ENCODE measurements at regions of chr1 and their contacts with region 1.

Region 1: GRCh38 chr1:159370855-159371254 is 61.1 kb upstream of the OR10J4 start:
- DNase-seq: no peak
- ATAC-seq: no peak
- H3K4me3 ChIP-seq: no peak overlapping the region
- H3K27ac ChIP-seq: no peak overlapping the region
- H3K4me1 ChIP-seq: no peaks in the 10 kb centered on the region
- H3K27me3 ChIP-seq: no peaks in the 10 kb centered on the region
- CTCF ChIP-seq: no peak

Region 2: DNA sequence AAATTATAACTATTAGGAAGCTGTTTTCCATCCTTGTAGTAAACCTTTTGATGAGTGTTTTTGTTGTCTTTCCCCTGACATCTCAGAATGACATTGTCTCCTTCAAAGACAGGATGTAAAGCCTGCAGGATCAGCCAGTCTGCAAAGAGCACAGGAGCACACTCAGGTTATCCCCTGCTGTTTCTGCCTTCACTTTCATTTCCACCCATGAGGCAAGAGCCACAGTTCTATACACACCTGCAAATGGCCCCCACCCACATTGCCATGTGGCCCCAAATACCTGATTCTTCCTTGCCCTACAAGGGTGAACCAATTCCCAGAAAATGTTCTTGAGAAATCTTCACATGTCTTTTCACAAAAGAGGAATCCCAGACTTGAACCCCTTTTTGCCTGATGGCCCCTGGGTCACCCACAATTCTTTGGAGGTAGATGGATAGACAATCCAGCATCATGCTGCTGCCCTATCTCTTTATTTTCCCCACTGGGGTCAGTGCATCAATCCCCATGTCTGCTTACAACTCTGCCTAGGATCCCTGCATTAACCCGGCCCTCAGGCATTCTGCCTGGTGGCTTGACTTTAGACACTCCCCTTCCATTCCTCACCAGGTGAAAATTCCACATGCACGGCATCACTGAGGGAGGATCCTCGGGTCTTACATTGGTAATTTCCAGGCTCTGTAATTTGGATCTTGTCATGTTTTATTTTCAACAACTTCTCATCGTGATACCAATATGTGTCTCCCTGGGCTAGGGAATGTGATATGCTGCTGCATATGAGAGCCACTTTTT is 1672.9 kb before region 1 on chr1:
- intact Hi-C with region 1: loop called in 1 of 2 experiments (anchors 5 kb)
- DNase-seq: no peak
- ATAC-seq: no peak
- H3K4me3 ChIP-seq: no peak overlapping the region
- H3K27ac ChIP-seq: no peak overlapping the region
- H3K4me1 ChIP-seq: no peaks in the 10 kb centered on the region
- H3K27me3 ChIP-seq: no peaks in the 10 kb centered on the region
- CTCF ChIP-seq: no peak

Region 3: GRCh38 chr1:160124705-160125478 is 754.0 kb after region 1 on chr1:
- intact Hi-C with region 1: no loop called
- DNase-seq: peak in 1 of 2 donors; percentile 72
- ATAC-seq: peak; percentile 67 to 74 (median 73)
- H3K4me3 ChIP-seq: peak overlapping the region; percentile 37
- H3K27ac ChIP-seq: peak overlapping the region; percentile 98
- H3K4me1 ChIP-seq: peaks cover 88% of the 10 kb centered on the region
- H3K27me3 ChIP-seq: no peaks in the 10 kb centered on the region
- CTCF ChIP-seq: no peak